ENCODE measurements at regions of chr2 and their contacts with region 1.

Region 1: DNA sequence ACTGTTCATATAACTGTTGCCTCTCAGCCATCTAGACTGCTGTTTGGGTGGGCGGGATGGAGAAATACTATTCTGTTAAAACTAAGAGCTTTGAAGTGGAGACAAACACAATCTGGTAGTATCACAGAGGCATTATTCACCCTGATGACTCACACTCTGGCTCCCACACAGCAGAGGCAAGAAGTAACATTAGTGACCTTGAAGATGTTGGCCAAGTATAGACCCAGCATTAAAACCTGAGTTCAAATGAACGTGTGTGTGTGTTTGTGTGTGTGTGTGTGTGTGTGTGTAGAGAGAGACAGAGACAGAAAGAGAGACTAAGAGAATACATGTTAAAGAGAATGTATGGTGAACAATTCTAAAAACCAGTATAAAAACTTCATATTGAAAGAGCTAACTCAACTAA is 22.5 kb upstream of the ACVR1 start:
- DNase-seq: peak in 1 of 5 donors; percentile 55
- ATAC-seq: peak; percentile 50 to 92 (median 82)
- H3K4me3 ChIP-seq: no peak overlapping the region
- H3K27ac ChIP-seq: peak overlapping the region in 1 of 12 donors; percentile 76
- H3K4me1 ChIP-seq: peaks cover 0 to 26% (median 5%) of the 10 kb centered on the region in 12 donors
- H3K27me3 ChIP-seq: no peaks in the 10 kb centered on the region
- CTCF ChIP-seq: no peak
- POLR2A ChIP-seq: no peak

Region 2: GRCh38 chr2:157989227-157989626 is 90.6 kb after region 1 on chr2:
- intact Hi-C with region 1: loop called in 3 of 10 experiments (anchors 10 kb)
- DNase-seq: no peak
- ATAC-seq: no peak
- H3K4me3 ChIP-seq: no peak overlapping the region
- H3K27ac ChIP-seq: no peak overlapping the region
- H3K4me1 ChIP-seq: no peaks in the 10 kb centered on the region
- H3K27me3 ChIP-seq: no peaks in the 10 kb centered on the region
- CTCF ChIP-seq: peak in 1 of 12 donors; percentile 7
- POLR2A ChIP-seq: no peak

Measured in heart left ventricle (tissue), 16 donors.